A673 (cell line): ENCODE measurements at regions of chr7 and their contacts with region 1.

Region 1: DNA sequence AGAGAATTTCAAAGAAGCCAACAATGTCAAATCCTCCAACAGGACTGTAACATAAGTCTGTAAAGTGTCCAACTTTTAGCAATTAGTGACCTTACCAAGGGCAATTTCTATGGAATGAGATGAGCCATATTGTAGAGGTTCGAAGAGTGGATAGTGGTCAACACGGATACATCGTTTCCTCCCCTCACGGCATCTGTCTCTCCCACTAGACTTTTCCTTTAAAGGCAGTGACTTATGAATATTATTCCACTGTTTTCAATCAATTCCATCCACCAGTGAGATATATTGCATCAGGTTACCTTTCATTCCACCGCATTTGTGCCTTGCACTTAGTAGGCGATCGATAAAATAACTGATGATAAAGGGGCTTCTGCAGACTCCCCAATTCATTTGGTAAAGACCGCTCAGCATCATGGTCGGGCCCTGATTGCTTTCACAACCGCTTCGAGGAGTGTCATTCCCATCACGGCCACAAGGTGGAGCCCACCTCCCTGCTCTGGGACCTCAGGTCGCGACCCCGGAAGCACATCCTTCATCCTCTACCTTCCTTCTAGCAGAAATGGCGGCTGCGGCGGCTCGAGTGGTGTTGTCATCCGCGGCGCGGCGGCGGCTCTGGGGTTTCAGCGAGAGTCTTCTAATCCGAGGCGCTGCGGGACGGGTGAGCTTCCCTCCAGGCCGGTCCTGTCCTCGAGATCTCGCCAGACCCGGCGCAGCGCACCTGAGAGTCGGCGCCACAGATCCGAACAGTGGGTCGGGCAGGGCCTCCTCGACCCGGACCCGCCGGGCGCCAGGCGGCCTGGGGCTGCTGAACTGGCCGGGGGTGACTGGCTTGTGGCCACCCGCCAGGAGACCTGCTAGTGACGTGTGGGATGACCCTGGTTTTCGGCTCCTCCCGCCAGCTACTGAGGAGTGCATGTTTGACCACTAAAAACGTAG is at the start of gene PMPCB:
- DNase-seq: peak; percentile 94
- H3K4me3 ChIP-seq: peak within 1 kb of the TSS; percentile 94
- H3K27ac ChIP-seq: peak within 1 kb of the TSS; percentile 78
- H3K4me1 ChIP-seq: peaks cover 4% of the 10 kb centered on the region
- H3K27me3 ChIP-seq: no peaks in the 10 kb centered on the region
- CTCF ChIP-seq: peak; percentile 90
- total RNA-seq, gene PMPCB: 66.8 and 71.7 TPM in 2 replicates

Region 2: GRCh38 chr7:103129702-103130549 is 167.2 kb before region 1 on chr7:
- CTCF ChIA-PET with region 1: no interaction called
- POLR2A ChIA-PET with region 1: no interaction called
- intact Hi-C with region 1: no loop called
- DNase-seq: no peak
- H3K4me3 ChIP-seq: no peak overlapping the region
- H3K27ac ChIP-seq: no peak overlapping the region
- H3K4me1 ChIP-seq: peaks cover 4% of the 10 kb centered on the region
- H3K27me3 ChIP-seq: no peaks in the 10 kb centered on the region
- CTCF ChIP-seq: no peak

Region 3: GRCh38 chr7:103413407-103413806 is 116.2 kb after region 1 on chr7:
- CTCF ChIA-PET with region 1: no interaction called
- POLR2A ChIA-PET with region 1: no interaction called
- intact Hi-C with region 1: loop called (anchors 5 kb)
- DNase-seq: no peak
- H3K4me3 ChIP-seq: no peak overlapping the region
- H3K27ac ChIP-seq: no peak overlapping the region
- H3K4me1 ChIP-seq: no peaks in the 10 kb centered on the region
- H3K27me3 ChIP-seq: peaks cover 29% of the 10 kb centered on the region
- CTCF ChIP-seq: no peak

Region 4: GRCh38 chr7:103636153-103636552 is 339.0 kb after region 1 on chr7:
- CTCF ChIA-PET with region 1: no interaction called
- POLR2A ChIA-PET with region 1: no interaction called
- intact Hi-C with region 1: no loop called
- DNase-seq: peak; percentile 31
- H3K4me3 ChIP-seq: no peak overlapping the region
- H3K27ac ChIP-seq: no peak overlapping the region
- H3K4me1 ChIP-seq: no peaks in the 10 kb centered on the region
- H3K27me3 ChIP-seq: peaks cover 14% of the 10 kb centered on the region
- CTCF ChIP-seq: no peak